ENCODE measurements at regions of chr11 and their contacts with region 1.

Region 1: DNA sequence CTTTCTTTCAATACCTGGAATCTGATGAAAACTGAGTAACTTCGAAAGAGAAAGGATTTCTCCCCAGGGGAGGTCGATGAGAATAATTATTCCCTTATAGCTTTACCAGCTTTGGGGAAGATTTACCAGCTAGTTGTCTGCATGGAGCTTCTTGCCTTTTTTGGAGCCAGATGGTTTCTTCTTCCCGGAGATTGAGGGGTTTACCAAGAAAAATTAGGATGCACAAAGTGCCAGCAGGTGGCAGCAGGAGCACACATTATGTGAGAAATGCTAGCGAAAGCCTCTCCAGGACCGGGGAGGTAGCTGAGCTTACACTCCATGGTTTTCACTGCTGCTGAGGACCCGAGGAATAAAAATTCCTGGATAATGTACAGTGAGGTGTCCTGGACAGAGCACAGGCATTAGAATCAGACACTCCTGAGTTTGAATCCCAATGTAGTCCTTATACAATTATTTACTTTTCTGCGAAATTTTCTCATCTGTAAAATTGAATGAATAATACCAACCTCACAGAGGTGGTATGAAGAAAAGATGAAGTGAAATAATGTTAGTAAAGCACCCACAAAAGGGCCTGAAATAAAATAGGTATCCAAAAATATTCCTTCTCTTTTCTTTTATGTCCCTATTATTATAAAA is 46.0 kb upstream of the PARVA start:
- DNase-seq: peak; percentile 38
- H3K4me3 ChIP-seq: no peak overlapping the region
- CTCF ChIP-seq: peak; percentile 59

Region 2: GRCh38 chr11:11669233-11669846 is 662.0 kb before region 1 on chr11:
- CTCF ChIA-PET with region 1: no interaction called
- POLR2A ChIA-PET with region 1: no interaction called
- DNase-seq: no peak
- H3K4me3 ChIP-seq: no peak overlapping the region
- CTCF ChIP-seq: no peak

Region 3: GRCh38 chr11:12318791-12319438 is 12.4 kb before region 1 on chr11:
- CTCF ChIA-PET with region 1: interaction called, 35 read pairs
- POLR2A ChIA-PET with region 1: no interaction called
- DNase-seq: peak; percentile 23
- H3K4me3 ChIP-seq: no peak overlapping the region
- CTCF ChIP-seq: no peak

Region 4: GRCh38 chr11:12411806-12412727 is 80.7 kb after region 1 on chr11:
- CTCF ChIA-PET with region 1: interaction called, 13 read pairs
- POLR2A ChIA-PET with region 1: no interaction called
- DNase-seq: peak; percentile 90
- H3K4me3 ChIP-seq: no peak overlapping the region
- CTCF ChIP-seq: peak; percentile 84

Region 5: GRCh38 chr11:12508151-12508751 is 176.9 kb after region 1 on chr11:
- CTCF ChIA-PET with region 1: interaction called, 23 read pairs
- POLR2A ChIA-PET with region 1: no interaction called
- DNase-seq: no peak
- H3K4me3 ChIP-seq: no peak overlapping the region
- CTCF ChIP-seq: no peak

Region 6: GRCh38 chr11:12888525-12889158 is 557.3 kb after region 1 on chr11:
- CTCF ChIA-PET with region 1: interaction called, 82 read pairs
- POLR2A ChIA-PET with region 1: no interaction called
- DNase-seq: peak; percentile 71
- H3K4me3 ChIP-seq: no peak overlapping the region
- CTCF ChIP-seq: peak; percentile 75

Region 7: DNA sequence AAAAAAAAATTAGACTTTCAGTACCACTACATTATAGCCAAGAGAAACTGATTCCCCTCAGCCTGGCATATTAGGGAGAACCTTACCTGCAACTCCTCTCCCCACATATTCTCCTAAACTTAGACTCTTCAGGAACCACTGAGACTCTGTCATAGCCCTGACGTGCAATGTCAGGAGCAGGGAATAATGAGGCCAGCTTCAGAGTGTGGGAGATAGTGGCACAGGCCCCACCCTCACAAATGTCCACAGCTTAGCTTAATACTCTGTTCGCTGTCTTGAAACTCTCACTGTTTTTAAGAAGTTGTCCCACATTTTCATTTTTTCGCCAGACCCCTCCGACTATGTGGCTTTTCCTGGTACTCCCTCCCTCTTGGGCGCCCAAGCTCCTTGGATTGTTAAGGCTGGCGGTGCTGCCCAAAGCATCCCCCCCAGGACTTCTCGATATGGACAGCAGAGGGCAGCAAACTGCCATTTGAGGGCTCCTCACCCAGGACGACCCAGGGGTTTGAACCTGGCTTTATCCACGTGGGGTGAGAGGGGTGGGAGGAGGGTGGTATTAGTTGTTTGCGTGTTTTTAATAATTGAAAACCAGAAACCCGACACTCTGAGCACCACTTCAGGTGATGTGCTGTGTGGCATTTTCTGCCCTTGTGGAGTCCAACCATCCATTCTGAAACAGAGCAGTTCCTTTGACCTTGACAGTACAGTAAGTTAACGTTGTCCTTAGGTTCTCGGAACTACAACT is 632.6 kb after region 1 on chr11:
- CTCF ChIA-PET with region 1: interaction called, 79 read pairs
- POLR2A ChIA-PET with region 1: no interaction called
- DNase-seq: no peak
- H3K4me3 ChIP-seq: no peak overlapping the region
- CTCF ChIP-seq: peak; percentile 84

Measured in AG04449 (cell line).